ENCODE measurements at regions of chr4 and their contacts with region 1.

Region 1: DNA sequence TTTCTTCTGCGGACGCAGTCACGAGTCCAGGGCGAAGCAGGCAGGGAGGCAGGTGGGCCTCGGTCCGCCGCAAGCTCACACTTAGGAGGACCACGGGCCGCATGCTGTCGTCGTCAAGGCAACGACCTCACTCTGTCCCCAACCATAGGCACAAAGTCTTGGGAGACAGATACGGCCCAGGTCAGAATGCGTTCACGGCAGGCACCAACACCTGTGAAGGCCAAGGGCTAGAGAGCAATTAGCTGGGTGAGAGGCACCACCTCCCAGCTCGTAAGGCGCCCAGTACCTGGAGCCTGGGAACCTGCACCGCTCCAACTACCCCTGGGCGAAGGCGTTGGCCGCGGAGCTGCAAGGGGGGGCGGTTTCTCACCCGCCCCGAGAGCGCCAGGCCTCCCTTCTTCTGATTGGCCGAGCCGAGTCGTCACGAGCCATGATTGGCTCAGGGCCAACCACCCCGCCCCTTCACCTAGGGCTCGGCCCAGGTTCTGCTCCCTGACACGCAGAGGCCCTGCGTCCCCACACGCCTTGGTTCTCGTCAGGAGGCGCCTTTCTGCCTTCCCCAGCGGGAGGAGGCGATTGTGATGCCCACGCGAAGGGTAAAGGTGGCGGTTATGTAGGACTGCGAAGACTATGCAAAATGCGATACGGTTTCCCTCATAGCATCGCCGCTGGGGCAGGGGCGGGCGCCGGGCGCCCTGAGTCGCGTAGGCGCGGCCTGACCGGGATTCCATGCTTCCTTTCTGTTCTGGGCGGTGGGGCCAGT is at the start of gene CDKL2:
- DNase-seq: peak; percentile 83
- ATAC-seq: peak; percentile 100
- H3K4me3 Mint-ChIP-seq: peak within 1 kb of the TSS; percentile 87
- H3K27ac Mint-ChIP-seq: peak within 1 kb of the TSS; percentile 50
- H3K4me1 Mint-ChIP-seq: peaks cover 8% of the 10 kb centered on the region
- H3K27me3 Mint-ChIP-seq: no peaks in the 10 kb centered on the region
- CTCF ChIP-seq: no peak
- total RNA-seq, gene CDKL2: not detected in 2 replicates

Region 2: GRCh38 chr4:75514131-75514948 is 116.0 kb before region 1 on chr4 and contains the starts of genes RCHY1 and THAP6:
- CTCF ChIA-PET with region 1: no interaction called
- POLR2A ChIA-PET with region 1: no interaction called
- intact Hi-C with region 1: loop called (anchors 2 kb)
- DNase-seq: peak; percentile 88
- ATAC-seq: peak; percentile 87
- H3K4me3 Mint-ChIP-seq: no peak within 1 kb of the TSS
- H3K27ac Mint-ChIP-seq: peak within 1 kb of the TSS; percentile 95
- H3K4me1 Mint-ChIP-seq: peaks cover 39% of the 10 kb centered on the region
- H3K27me3 Mint-ChIP-seq: no peaks in the 10 kb centered on the region
- CTCF ChIP-seq: no peak
- total RNA-seq, gene RCHY1: 28.5 and 29.6 TPM in 2 replicates
- total RNA-seq, gene THAP6: 17.4 and 24.6 TPM in 2 replicates

Region 3: DNA sequence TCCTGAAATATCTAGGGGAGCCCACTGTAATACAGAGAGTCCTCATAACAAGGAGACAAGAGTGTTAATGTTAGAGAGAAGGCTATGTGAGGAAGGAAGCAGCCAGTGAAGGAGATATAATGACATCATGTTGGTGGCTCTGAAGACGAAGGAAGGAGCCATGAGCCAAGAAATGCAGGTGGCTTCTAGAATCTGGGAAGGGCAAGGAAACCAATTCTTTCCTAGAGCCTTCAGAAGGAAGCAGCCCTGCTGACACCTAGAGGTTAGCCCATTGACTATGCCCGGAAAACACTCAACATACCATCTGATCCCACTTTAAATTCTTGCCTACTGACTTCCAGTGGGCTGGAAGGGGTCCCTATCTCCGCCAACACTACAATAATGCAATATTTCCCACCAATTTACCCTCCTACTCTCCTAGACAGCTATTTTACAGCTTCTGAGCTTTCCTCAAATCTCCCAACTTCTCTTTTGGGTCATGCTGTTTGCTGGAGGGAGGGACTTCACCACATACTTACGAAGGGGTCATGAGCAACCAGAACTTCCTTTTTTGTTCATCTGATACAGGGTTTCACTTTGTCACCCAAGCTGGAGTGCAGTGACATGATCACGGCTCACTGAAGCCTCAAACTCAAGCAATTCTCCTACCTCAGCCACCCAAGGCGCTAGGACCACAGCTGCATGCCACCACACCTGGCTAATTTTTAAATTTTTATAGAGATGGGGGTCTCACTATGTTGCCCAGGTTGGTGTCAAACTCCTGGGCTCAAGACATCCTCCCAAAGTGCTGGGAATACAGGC is 68.0 kb after region 1 on chr4:
- CTCF ChIA-PET with region 1: no interaction called
- POLR2A ChIA-PET with region 1: interaction called, 6 read pairs
- intact Hi-C with region 1: loop called (anchors 2 kb)
- DNase-seq: peak; percentile 21
- ATAC-seq: peak; percentile 96
- H3K4me3 Mint-ChIP-seq: peak overlapping the region; percentile 44
- H3K27ac Mint-ChIP-seq: peak overlapping the region; percentile 90
- H3K4me1 Mint-ChIP-seq: peaks cover 38% of the 10 kb centered on the region
- H3K27me3 Mint-ChIP-seq: no peaks in the 10 kb centered on the region
- CTCF ChIP-seq: no peak